ENCODE measurements at regions of chr5 and their contacts with region 1.

Region 1: GRCh38 chr5:14108170-14108996 is 34.8 kb upstream of the TRIO start:
- DNase-seq: peak; percentile 75
- CTCF ChIP-seq: peak; percentile 73

Region 2: DNA sequence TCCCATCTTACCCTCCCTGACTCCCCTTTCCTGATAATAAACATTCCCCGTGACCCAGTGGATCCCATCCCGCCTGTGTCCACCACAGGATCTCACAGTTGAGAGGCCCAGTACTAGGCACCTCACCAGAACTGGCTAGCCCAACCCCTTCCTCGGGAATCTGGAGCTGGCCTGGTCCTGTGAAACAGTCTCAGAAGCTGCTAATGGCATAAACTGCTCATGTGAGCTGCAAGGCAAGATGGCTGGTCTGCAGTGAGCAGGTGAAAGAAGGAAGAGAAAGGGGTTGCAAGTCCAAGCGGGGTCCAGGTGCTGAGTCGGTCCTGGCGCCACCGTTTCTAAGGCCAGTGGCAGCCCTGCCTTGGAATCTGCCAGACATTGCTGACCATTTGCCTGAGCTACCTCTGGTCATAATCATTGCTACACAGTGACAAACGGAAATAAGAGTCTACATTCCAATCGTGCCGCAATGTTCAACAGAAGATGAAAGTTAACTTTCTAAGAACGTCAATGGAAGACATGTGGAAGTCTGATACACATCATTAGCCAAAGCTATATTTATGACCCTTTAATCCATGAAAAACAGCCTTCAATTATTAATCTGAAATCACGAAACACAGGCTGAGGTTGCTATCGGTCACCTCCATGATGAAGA is 197.6 kb before region 1 on chr5:
- CTCF ChIA-PET with region 1: no interaction called
- POLR2A ChIA-PET with region 1: no interaction called
- DNase-seq: no peak
- CTCF ChIP-seq: no peak

Region 3: GRCh38 chr5:14120186-14120585 is 11.8 kb after region 1 on chr5:
- CTCF ChIA-PET with region 1: interaction called, 20 read pairs
- POLR2A ChIA-PET with region 1: no interaction called
- DNase-seq: no peak
- CTCF ChIP-seq: no peak

Region 4: DNA sequence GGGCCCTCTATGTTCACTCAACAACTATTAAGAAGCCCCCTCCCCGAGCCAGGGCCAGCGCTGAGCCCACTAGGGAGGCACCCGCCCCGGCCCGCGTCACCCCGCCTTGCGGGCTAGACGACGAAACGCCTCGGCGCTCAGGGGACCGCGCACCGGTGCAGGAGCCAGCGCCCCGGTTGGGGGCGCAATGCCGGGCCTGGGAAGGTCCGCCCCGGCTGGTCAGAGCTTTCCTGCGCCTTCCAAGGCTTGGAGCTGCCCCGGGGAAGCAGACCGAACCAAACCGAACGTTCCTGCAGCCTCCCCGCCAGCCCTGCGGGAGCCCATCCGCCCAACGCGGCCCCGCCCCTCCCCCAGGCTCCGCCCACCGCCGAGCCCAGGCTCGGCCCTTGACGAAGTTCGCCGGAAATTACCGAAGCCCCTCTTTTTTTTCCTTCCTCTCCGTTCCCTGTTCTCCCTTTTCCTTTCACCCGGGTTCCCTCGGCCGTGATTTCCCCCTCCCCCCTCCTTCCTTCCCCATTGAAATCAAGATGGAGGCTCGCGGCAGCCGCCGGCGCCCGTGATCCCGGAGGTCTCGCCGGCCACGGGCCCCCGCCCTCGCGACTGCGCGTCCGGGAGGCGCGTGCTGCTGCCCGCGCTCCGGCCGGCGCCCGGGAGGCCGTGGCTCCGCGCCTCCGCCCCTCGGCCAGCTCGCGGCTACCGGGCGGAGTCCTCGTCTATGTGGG is 34.6 kb after region 1 on chr5 and contains the start of gene TRIO:
- CTCF ChIA-PET with region 1: interaction called, 11 read pairs
- POLR2A ChIA-PET with region 1: interaction called, 3 read pairs
- DNase-seq: peak; percentile 91
- CTCF ChIP-seq: peak; percentile 42

Region 5: DNA sequence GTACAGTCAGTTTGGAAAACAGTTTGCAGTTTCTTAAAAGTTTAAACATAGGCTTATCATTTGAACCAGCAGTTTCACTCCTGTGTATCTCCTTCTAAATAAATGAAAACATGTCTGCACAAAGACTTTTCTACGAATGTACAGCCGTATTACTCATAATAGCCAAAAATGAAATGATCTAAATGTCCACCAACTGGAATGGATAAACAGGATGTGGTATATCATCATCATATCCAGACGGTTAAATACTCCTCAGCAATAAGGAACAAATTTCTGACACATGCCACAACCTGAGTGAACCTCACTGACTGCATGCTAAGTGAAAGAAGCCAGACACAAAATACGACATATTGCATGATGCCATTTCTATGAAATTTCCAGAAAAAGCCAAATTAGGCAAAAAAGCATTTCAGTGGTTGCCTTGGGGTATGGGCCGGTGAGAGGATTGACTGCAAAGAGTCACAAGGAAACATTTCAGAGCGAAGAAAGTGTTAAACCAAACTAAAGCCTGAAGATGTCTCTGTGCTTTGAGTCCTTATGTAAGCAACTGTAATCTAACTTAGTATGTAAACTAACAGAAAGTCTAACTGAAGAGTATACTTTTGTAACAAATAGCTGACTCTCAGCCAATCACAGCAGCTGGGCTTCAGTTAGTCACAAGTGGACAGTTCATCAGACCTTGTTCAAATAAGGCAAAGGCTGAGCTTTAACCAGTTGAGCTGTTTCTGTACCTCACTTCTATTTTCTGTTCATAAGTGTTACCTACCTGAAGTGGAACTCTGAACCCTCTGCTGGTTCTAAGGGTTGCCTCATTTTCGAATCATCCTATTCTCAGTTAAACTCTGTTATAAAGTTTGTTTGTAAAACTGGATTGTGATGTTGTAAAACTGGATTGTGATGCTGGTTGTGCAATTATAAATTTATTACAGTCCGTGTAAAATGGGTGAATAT is 100.0 kb after region 1 on chr5:
- CTCF ChIA-PET with region 1: interaction called, 10 read pairs
- POLR2A ChIA-PET with region 1: no interaction called
- DNase-seq: peak; percentile 49
- CTCF ChIP-seq: no peak

Region 6: GRCh38 chr5:14281746-14282181 is 173.4 kb after region 1 on chr5:
- CTCF ChIA-PET with region 1: interaction called, 18 read pairs
- POLR2A ChIA-PET with region 1: no interaction called
- DNase-seq: peak; percentile 34
- CTCF ChIP-seq: no peak

Measured in GM10248 (cell line).